ENCODE measurements at regions of chr18 and their contacts with region 1.

Region 1: DNA sequence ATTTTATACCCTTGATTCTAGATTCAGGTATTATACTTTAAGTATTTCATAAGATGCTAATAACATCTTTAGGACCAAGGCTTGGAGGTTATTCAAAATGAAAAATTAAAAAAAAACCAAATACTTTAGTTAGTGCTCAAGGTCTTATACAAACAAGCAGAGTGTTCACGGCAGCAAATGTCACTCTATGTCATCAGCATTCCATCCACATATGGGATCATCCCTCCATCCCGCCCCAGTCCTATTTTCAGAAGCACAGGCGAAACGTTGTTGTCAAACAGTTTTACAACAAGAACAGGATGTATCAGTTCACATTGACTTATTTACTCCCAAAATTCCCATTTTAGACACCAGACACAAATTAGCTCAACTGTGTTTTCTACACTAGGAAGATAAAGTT is 83.7 kb downstream of the DSEL start:
- DNase-seq: no peak
- H3K4me3 Mint-ChIP-seq: no peak overlapping the region
- H3K27ac Mint-ChIP-seq: no peak overlapping the region
- H3K4me1 Mint-ChIP-seq: no peaks in the 10 kb centered on the region
- H3K27me3 Mint-ChIP-seq: peaks cover 3% of the 10 kb centered on the region

Region 2: GRCh38 chr18:67500522-67501205 is 67.9 kb after region 1 on chr18:
- CTCF ChIA-PET with region 1: no interaction called
- intact Hi-C with region 1: no loop called
- DNase-seq: no peak
- H3K4me3 Mint-ChIP-seq: no peak overlapping the region
- H3K27ac Mint-ChIP-seq: no peak overlapping the region
- H3K4me1 Mint-ChIP-seq: no peaks in the 10 kb centered on the region
- H3K27me3 Mint-ChIP-seq: peaks cover 8% of the 10 kb centered on the region

Region 3: GRCh38 chr18:68060871-68061270 is 628.1 kb after region 1 on chr18:
- CTCF ChIA-PET with region 1: no interaction called
- intact Hi-C with region 1: no loop called
- DNase-seq: no peak
- H3K4me3 Mint-ChIP-seq: no peak overlapping the region
- H3K27ac Mint-ChIP-seq: no peak overlapping the region
- H3K4me1 Mint-ChIP-seq: no peaks in the 10 kb centered on the region
- H3K27me3 Mint-ChIP-seq: no peaks in the 10 kb centered on the region

Region 4: DNA sequence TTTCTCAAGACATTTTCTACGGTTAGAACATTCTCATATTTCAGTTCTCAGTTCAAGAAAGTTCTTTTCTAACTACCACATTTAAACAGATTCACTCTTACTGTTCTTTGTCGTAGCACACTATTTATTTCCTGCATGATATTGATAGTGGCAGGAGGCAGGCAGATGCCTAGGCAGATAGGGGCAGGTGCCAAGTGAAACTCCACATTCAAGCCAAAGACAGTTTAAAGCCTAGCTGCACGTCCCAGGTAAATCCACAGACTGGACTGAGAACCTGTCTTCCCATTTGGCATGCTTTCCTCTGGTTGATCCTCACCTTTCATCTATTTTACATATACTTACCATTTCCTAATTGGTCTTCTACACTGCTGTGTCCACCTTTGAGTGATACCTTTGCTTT is 922.8 kb after region 1 on chr18:
- CTCF ChIA-PET with region 1: no interaction called
- intact Hi-C with region 1: loop called (anchors 5 kb)
- DNase-seq: no peak
- H3K4me3 Mint-ChIP-seq: no peak overlapping the region
- H3K27ac Mint-ChIP-seq: no peak overlapping the region
- H3K4me1 Mint-ChIP-seq: no peaks in the 10 kb centered on the region
- H3K27me3 Mint-ChIP-seq: no peaks in the 10 kb centered on the region

Measured in activated naive CD4-positive, alpha-beta T cell treated with anti-CD3 and anti-CD28 coated beads for 36 hours (primary cell).